Activated naive CD4-positive, alpha-beta T cell treated with anti-CD3 and anti-CD28 coated beads for 36 hours (primary cell): ENCODE measurements at regions of chr18 and their contacts with region 1.

Region 1: GRCh38 chr18:22856870-22857269 is 76.3 kb upstream of the RBBP8 start:
- DNase-seq: no peak
- H3K4me3 Mint-ChIP-seq: no peak overlapping the region
- H3K27ac Mint-ChIP-seq: no peak overlapping the region
- H3K4me1 Mint-ChIP-seq: no peaks in the 10 kb centered on the region
- H3K27me3 Mint-ChIP-seq: peaks cover 36% of the 10 kb centered on the region

Region 2: GRCh38 chr18:22370414-22370813 is 486.5 kb before region 1 on chr18:
- CTCF ChIA-PET with region 1: no interaction called
- intact Hi-C with region 1: no loop called
- DNase-seq: no peak
- H3K4me3 Mint-ChIP-seq: no peak overlapping the region
- H3K27ac Mint-ChIP-seq: no peak overlapping the region
- H3K4me1 Mint-ChIP-seq: no peaks in the 10 kb centered on the region
- H3K27me3 Mint-ChIP-seq: peaks cover 2% of the 10 kb centered on the region

Region 3: GRCh38 chr18:22900558-22901238 is 43.8 kb after region 1 on chr18:
- CTCF ChIA-PET with region 1: interaction called, 3 read pairs
- intact Hi-C with region 1: loop called (anchors 10 kb)
- DNase-seq: no peak
- H3K4me3 Mint-ChIP-seq: no peak overlapping the region
- H3K27ac Mint-ChIP-seq: no peak overlapping the region
- H3K4me1 Mint-ChIP-seq: no peaks in the 10 kb centered on the region
- H3K27me3 Mint-ChIP-seq: peaks cover 8% of the 10 kb centered on the region